ENCODE measurements at regions of chr4 and their contacts with region 1.

Region 1: DNA sequence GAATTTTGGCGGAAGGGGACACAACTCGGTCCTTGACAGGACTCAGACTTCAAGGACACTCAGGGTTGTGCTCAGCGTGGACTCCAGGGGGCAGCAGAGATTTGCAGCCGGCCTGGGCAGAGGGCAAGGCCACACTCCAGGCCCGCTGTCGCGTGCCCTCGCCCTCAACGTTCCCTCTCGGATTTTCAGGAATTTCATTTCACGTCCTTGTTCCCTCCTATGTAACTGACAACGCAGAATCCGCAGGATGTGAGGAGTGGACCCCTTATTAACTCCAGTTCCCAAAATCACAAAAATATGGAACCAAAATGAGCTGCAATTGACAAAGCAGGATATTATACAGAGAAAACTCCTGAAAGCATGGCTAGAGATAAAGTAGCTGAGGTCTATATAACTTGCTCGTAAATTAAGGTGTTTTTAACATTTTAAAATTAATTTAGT is 21.0 kb upstream of the DCTD start:
- DNase-seq: peak; percentile 26 to 76 (median 48)
- ATAC-seq: peak; percentile 96
- H3K4me3 ChIP-seq: no peak overlapping the region
- H3K4me3 Mint-ChIP-seq: peak overlapping the region in 1 of 10 donors; percentile 21
- H3K27ac ChIP-seq: no peak overlapping the region
- H3K27ac Mint-ChIP-seq: no peak overlapping the region
- H3K4me1 ChIP-seq: no peaks in the 10 kb centered on the region
- H3K4me1 Mint-ChIP-seq: peaks cover 0 to 4% (median 0%) of the 10 kb centered on the region in 7 donors
- H3K27me3 ChIP-seq: no peaks in the 10 kb centered on the region
- H3K27me3 Mint-ChIP-seq: peaks cover 12 to 27% (median 15%) of the 10 kb centered on the region in 5 donors

Region 2: DNA sequence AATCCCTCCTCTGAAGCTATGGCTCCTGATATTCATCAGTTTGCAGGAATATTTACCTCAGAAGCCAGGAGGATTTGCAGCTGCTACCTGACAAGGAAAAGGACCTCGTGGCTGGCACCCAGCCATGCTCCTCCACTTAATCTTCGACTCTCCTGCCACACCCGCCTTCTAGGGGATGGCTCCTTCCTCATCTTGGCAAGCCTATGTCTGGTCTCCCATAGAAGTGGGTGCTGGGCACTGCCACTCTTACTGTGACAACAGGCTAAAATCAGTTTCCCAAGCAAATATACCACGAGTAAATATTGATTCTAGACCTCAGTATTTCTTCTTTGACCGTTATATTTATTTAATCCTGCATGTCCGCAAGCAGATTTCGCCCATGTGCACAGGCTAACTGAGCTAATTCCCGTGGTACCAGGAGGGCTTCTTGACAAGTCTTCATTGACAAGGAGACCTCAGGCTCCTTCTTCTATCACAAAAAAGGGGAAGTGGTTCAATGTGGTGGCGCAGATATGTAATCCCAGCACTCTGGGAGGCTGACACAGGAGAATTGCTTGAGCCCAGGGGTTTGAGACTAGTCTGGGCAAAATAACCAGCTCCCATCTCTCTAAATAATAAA is 31.5 kb after region 1 on chr4:
- CTCF ChIA-PET with region 1: no interaction called
- POLR2A ChIA-PET with region 1: no interaction called
- intact Hi-C with region 1: no loop called
- DNase-seq: no peak
- ATAC-seq: no peak
- H3K4me3 ChIP-seq: no peak overlapping the region
- H3K4me3 Mint-ChIP-seq: no peak overlapping the region
- H3K27ac ChIP-seq: no peak overlapping the region
- H3K27ac Mint-ChIP-seq: no peak overlapping the region
- H3K4me1 ChIP-seq: no peaks in the 10 kb centered on the region
- H3K4me1 Mint-ChIP-seq: peaks cover 0 to 1% (median 0%) of the 10 kb centered on the region in 7 donors
- H3K27me3 ChIP-seq: no peaks in the 10 kb centered on the region
- H3K27me3 Mint-ChIP-seq: peaks cover 32 to 71% (median 52%) of the 10 kb centered on the region in 5 donors

Region 3: DNA sequence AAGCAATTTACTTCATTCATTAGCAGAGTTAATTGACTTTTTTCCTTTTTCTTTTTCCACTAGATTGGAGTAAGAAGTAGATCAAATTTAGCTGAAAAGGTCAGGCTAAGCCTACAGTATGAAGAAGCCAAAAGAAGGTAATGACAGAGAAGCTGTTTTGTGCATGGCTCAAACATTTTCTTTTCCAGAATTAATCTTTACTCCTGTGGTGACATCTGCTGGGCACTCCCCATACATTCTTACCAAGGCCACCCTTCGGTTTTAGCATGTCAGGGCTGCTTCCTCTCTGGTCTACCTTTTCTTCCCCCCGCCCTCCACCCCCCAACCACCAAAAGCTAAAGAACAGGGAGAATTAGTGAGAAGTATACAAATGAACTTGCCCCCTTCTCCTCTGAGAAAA is 311.6 kb after region 1 on chr4:
- CTCF ChIA-PET with region 1: interaction called, 12 read pairs
- POLR2A ChIA-PET with region 1: no interaction called
- intact Hi-C with region 1: loop called in 1 of 2 experiments (anchors 1 kb)
- DNase-seq: peak in 4 of 9 donors; percentile 3 to 19 (median 18)
- ATAC-seq: peak; percentile 47
- H3K4me3 ChIP-seq: no peak overlapping the region
- H3K4me3 Mint-ChIP-seq: no peak overlapping the region
- H3K27ac ChIP-seq: no peak overlapping the region
- H3K27ac Mint-ChIP-seq: no peak overlapping the region
- H3K4me1 ChIP-seq: no peaks in the 10 kb centered on the region
- H3K4me1 Mint-ChIP-seq: no peaks in the 10 kb centered on the region
- H3K27me3 ChIP-seq: no peaks in the 10 kb centered on the region
- H3K27me3 Mint-ChIP-seq: peaks cover 0 to 5% (median 0%) of the 10 kb centered on the region in 5 donors

Region 4: DNA sequence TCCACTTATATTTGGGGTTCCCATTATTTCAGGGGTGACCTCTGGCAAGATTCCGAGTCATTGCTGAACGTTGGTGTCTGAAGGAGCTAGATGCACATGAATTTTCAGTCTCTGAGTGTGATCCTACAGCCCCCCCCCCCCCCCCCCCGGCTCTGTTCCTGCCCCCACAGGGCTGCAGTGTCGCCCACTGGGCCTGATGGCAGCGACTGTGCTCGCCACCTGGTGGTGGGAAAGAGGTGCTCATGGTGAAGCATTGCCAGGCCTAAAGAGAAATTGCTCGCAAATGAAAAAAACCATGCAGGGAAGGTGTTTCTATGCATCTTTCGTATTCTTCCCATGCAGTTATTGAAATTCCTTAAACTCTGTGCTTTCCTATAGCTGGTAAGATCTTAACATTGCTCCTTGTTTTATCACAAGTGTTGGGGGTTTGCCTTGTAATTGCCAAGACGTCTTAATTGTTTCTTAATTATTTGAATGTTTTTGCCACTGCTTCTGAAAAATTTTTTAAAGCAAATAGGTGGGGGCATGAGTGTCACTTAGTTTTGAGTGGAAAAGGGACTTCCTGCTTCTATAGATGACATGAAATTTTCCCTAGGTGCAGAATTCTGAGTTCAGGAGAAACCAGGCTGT is 318.6 kb after region 1 on chr4:
- CTCF ChIA-PET with region 1: interaction called, 16 read pairs
- POLR2A ChIA-PET with region 1: no interaction called
- intact Hi-C with region 1: loop called (anchors 1 kb)
- DNase-seq: peak in 8 of 9 donors; percentile 5 to 32 (median 20)
- ATAC-seq: peak; percentile 71
- H3K4me3 ChIP-seq: no peak overlapping the region
- H3K4me3 Mint-ChIP-seq: no peak overlapping the region
- H3K27ac ChIP-seq: no peak overlapping the region
- H3K27ac Mint-ChIP-seq: peak overlapping the region in 1 of 9 donors; percentile 6
- H3K4me1 ChIP-seq: peaks cover 0 to under 1% of the 10 kb centered on the region in 2 donors
- H3K4me1 Mint-ChIP-seq: peaks cover 0 to 2% (median under 1%) of the 10 kb centered on the region in 7 donors
- H3K27me3 ChIP-seq: no peaks in the 10 kb centered on the region
- H3K27me3 Mint-ChIP-seq: peaks cover 0 to 4% (median 0%) of the 10 kb centered on the region in 5 donors

Region 5: DNA sequence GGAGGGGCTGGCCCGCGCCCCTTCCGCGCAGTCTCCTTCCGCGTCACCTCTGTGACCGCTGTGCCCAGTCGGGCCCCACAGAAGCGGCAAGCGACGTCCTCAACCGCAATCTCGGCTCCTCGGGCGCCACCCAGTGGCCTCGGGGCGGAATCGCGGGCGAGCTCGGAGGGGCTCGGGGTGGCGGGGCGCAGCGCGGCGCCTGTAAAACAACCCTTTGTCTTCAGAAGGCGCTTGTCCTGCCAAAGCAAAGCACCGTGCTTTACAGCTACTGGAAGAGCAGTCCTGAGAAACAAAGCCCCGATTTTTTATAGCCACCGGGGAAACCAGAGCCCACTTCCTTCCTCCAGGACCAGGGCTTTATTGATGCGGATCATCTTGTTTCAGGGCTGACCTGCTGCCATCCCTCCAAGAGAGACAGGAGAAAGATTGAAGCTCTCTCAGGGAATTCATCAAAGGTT is 468.9 kb after region 1 on chr4:
- CTCF ChIA-PET with region 1: no interaction called
- POLR2A ChIA-PET with region 1: no interaction called
- intact Hi-C with region 1: loop called in 1 of 2 experiments (anchors 5 kb)
- DNase-seq: peak; percentile 83 to 96 (median 90)
- ATAC-seq: peak; percentile 99
- H3K4me3 ChIP-seq: peak overlapping the region; percentile 78
- H3K4me3 Mint-ChIP-seq: peak overlapping the region; percentile 60 to 88 (median 85)
- H3K27ac ChIP-seq: peak overlapping the region; percentile 72
- H3K27ac Mint-ChIP-seq: peak overlapping the region; percentile 80 to 95 (median 87)
- H3K4me1 ChIP-seq: no peaks in the 10 kb centered on the region
- H3K4me1 Mint-ChIP-seq: peaks cover 5 to 30% (median 17%) of the 10 kb centered on the region in 7 donors
- H3K27me3 ChIP-seq: no peaks in the 10 kb centered on the region
- H3K27me3 Mint-ChIP-seq: peaks cover 0 to 11% (median 0%) of the 10 kb centered on the region in 5 donors